ENCODE measurements at regions of chr5 and their contacts with region 1.

Region 1: DNA sequence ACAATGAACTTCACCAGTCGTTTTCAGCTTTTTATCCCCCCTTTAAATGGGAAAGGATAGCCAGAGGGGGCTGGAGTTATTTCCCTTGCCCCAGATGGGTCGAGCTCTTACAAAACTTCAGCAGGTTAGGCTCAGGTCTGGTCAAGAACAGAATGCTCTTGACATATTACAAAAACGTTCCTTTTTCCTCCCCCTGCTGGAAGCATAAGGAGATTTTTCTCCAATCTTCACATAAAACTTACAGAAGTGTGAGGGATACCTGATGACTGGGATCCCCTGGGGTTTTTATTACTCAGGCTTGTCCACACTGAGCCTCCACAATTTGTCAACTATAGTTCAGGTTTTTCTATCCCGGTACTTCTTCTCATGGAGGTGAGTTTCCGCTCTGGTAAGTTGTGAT is 60.8 kb downstream of the CSF2 start:
- DNase-seq: no peak
- ATAC-seq: no peak
- H3K4me3 ChIP-seq: no peak overlapping the region
- H3K27ac ChIP-seq: no peak overlapping the region
- H3K4me1 ChIP-seq: no peaks in the 10 kb centered on the region
- H3K27me3 ChIP-seq: no peaks in the 10 kb centered on the region

Region 2: DNA sequence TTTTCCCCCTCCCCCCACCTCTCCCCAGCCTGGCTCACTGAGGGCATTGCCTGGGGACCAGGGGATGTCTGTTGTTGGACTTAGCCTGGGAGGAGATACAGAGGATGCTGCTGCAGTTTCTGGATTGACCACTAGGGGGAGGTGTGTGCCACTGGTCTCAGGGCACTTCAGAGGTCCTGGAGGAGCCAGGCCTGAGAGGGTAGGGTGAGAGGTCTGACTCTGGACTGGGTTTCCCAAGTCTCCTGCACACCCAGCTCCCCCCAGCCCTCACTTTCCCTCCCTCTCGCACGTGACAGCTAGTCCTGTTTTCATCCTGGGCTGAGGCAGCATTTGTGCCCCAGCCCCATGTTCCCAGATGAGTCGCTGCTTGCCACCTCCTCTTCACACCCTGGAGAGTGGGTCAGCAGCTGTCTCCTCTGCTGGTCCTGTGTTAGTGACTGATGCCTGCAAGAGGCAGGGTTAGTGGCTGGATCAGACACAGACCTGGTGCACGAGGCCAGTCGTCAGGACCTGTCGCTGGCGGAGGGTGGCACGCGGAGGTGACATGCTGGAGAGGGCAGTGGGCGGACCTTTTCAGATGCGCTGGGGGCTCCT is 69.5 kb before region 1 on chr5:
- intact Hi-C with region 1: loop called in 1 of 4 experiments (anchors 5 kb)
- DNase-seq: peak in 2 of 3 donors; percentile 66 to 83
- ATAC-seq: peak; percentile 47 to 73
- H3K4me3 ChIP-seq: no peak overlapping the region
- H3K27ac ChIP-seq: no peak overlapping the region
- H3K4me1 ChIP-seq: no peaks in the 10 kb centered on the region
- H3K27me3 ChIP-seq: no peaks in the 10 kb centered on the region